Activated CD4-positive, alpha-beta memory T cell treated with anti-CD3 and anti-CD28 coated beads for 36 hours (primary cell): ENCODE measurements at regions of chr3 and their contacts with region 1.

Region 1: GRCh38 chr3:12423918-12424630 is 60.2 kb upstream of the TSEN2 start:
- DNase-seq: peak; percentile 63
- H3K4me3 Mint-ChIP-seq: no peak overlapping the region
- H3K27ac Mint-ChIP-seq: no peak overlapping the region
- H3K4me1 Mint-ChIP-seq: peaks cover 39% of the 10 kb centered on the region
- H3K27me3 Mint-ChIP-seq: peaks cover 19% of the 10 kb centered on the region

Region 2: DNA sequence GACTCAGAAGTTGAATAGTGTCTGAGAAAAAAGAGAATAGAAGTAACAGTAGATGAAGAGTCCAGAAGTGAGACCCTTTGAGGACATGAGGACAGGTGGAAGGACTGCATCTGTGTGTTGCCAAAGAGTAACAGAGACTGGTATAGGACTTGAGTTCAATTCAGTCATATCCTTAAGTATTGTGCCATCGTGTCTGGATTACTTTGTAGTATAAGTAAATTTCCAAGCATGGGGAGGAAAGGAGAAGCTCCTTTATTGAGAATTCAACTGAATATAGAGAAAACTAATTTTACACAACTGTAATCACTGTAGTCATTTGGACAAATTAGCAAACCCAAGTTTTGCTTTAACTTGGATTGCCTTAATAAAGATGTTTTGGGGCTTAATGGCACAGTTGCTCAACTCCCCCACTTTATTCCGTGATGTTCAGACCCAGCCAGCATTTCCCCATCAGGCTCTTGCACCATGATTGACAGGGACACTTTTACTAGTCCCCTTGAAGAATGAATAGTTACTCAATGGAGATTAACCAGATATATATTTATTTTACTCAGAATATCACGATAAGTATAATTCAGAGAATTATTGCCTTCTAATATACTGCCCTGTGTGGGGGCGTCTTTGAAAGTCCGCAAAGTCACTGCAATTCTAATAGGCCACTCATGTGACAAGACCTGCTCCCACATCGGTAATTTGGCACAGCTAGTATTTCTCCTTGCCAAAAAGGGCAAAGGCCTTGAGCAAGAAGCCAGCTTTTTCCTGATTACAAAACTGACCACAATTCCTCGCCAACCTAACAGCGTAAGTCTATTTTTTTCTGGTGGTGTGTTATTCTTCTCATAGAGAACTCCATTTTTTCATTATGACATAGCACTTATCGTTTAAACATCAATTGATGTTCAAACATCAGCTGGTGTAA is 73.9 kb before region 1 on chr3:
- CTCF ChIA-PET with region 1: no interaction called
- POLR2A ChIA-PET with region 1: no interaction called
- intact Hi-C with region 1: loop called (anchors 5 kb)
- DNase-seq: no peak
- H3K4me3 Mint-ChIP-seq: no peak overlapping the region
- H3K27ac Mint-ChIP-seq: no peak overlapping the region
- H3K4me1 Mint-ChIP-seq: peaks cover 9% of the 10 kb centered on the region
- H3K27me3 Mint-ChIP-seq: peaks cover 21% of the 10 kb centered on the region

Region 3: GRCh38 chr3:12454076-12454815 is 30.2 kb after region 1 on chr3:
- CTCF ChIA-PET with region 1: no interaction called
- POLR2A ChIA-PET with region 1: no interaction called
- intact Hi-C with region 1: no loop called
- DNase-seq: no peak
- H3K4me3 Mint-ChIP-seq: no peak overlapping the region
- H3K27ac Mint-ChIP-seq: no peak overlapping the region
- H3K4me1 Mint-ChIP-seq: peaks cover 10% of the 10 kb centered on the region
- H3K27me3 Mint-ChIP-seq: no peaks in the 10 kb centered on the region